Activated CD4-positive, alpha-beta T cell treated with anti-CD3 and anti-CD28 coated beads for 36 hours (primary cell): ENCODE measurements at regions of chr5 and their contacts with region 1.

Region 1: DNA sequence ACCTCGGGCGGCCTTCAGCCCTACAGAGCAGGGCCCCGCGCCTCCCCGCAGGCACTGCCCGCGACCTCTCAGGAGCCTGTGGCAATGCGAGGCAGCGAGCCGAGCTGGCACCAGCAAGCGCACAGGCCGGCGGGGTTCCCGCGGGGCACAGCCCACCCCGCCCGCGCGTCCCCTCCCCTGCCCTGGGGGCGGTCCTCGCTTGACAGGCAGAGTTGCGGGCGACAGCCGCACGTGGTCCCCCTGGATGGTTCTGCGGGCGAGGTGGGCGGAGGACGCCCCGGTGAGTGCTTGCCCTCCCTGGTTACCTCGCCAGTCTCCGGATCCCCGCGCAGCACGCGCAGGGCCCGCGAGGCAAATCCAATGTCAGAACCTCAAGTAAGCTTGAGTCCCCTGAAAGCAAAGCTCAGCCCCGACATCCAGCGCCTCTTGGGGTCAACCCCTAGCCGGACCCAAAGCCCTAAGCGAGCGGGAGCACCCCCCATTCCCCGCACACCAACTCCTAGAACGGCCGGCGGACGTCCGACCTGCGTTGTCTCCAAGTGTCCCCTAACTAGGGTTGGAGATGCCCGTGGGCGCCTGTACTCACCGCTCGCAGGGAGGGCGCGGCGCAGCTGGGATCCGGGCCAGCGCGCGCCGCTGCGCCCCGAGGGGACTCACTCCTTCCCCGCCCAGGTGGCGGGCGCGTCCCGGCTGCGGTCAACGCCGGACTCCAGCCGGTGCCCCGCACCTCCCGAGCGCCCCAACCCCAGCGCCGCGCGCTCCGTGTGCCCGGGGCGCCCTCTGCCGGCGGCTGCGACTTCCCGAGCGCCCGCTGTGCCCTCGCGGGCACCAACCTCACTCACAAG is at the start of gene DRD1:
- DNase-seq: peak; percentile 73
- ATAC-seq: peak; percentile 86
- H3K4me3 Mint-ChIP-seq: peak within 1 kb of the TSS; percentile 40
- H3K27ac Mint-ChIP-seq: no peak within 1 kb of the TSS
- H3K4me1 Mint-ChIP-seq: peaks cover 5% of the 10 kb centered on the region
- H3K27me3 Mint-ChIP-seq: peaks cover 52% of the 10 kb centered on the region
- total RNA-seq, gene DRD1: not detected

Region 2: DNA sequence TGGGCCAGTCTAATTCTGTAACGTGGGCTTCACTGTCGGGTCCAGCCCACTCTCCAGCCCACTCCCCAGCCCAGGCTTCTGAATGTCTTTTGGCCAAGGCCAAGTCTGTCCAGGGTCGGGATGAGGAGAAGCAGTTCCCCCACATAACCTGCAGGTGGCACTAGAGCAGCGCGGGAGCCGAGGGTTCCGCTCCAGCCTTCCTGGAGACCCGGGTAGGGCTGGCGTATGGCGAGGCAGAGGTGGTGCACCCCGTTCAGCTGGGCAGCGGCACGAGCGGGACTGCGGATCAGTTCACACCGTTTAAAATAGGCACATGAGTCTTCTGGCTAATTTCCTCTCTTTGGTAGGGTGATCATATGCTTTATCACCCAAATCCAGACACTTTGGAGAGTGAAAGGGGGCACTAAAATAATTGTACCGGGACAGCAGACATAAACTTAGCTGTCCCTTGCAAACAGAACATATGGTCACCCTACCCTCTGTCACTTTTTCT is 534.0 kb before region 1 on chr5:
- CTCF ChIA-PET with region 1: no interaction called
- POLR2A ChIA-PET with region 1: no interaction called
- intact Hi-C with region 1: loop called in 1 of 2 experiments (anchors 1 kb)
- DNase-seq: peak; percentile 75
- ATAC-seq: peak; percentile 66
- H3K4me3 Mint-ChIP-seq: no peak overlapping the region
- H3K27ac Mint-ChIP-seq: no peak overlapping the region
- H3K4me1 Mint-ChIP-seq: no peaks in the 10 kb centered on the region
- H3K27me3 Mint-ChIP-seq: peaks cover 35% of the 10 kb centered on the region

Region 3: DNA sequence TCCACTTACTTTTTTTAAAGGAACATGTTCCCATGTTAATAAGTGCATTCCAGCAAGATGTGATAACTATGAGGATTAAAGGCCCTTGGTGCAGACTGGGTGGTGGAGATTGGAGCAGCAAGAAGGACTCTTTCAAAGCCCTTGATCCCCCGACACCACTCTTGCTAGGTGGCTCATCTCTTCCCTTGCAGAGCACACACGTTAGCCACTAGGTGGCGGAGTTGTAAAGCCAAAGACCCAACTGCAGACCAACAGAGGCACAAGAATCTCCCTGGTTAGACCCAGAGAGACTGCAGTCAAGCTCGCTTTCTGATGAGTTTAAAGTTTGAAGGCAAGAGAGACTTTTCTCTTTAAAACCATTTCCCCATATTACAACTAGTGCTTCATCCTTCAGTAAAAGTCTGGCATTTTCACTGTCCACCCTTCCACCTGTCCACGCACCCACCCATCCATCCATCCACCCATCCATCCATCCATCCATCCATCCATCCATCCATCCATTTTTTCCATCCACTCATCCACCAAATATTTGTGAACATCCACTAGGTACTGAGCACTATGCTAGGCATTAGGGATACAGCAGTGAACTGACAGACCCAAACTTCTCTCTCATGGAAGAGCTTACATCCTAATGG is 493.0 kb before region 1 on chr5:
- CTCF ChIA-PET with region 1: interaction called, 5 read pairs
- POLR2A ChIA-PET with region 1: no interaction called
- intact Hi-C with region 1: loop called (anchors 1 kb)
- DNase-seq: peak; percentile 74
- ATAC-seq: peak; percentile 74
- H3K4me3 Mint-ChIP-seq: no peak overlapping the region
- H3K27ac Mint-ChIP-seq: no peak overlapping the region
- H3K4me1 Mint-ChIP-seq: no peaks in the 10 kb centered on the region
- H3K27me3 Mint-ChIP-seq: peaks cover 10% of the 10 kb centered on the region

Region 4: DNA sequence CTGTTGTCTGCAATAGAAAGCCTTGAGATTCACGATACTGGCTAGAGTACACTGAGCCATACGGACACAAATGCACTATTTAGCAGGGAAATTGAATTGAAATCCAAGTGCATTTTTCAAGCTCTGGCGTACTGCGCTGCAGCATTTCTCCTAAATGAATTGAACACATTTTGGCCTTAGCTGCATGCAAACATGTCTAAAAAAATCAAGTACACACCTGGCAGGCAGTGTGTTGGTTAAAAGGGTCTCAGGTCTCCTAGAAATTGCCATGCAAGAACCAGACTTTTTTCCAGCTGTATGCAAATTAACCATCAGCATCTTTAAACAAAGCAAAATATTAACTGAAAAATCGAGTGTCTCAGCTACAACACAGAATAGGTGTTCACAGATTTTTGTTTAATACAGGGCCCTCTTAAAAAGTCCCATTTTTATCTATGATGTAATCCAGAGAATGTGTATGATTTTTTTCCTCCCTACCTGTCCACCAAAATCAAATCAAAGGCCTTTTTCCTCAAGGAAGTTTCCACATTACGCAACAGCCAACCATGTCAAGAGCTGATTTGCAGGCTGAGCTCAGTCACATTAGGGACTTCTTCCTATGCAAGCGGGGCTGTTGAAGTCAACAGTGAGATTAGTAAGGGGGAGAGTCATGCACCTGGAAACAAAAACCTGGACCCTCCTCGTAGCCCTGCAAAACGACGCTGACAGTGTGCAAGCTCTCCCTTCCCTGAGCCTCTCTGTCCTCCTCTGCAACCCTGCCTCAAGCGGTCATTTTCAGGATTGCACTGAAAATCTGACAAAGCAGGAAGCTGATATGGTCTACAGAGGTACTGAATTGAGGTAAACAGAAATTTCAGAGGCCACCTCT is 20.0 kb after region 1 on chr5:
- CTCF ChIA-PET with region 1: interaction called, 12 read pairs
- POLR2A ChIA-PET with region 1: no interaction called
- intact Hi-C with region 1: no loop called
- DNase-seq: peak; percentile 84
- ATAC-seq: peak; percentile 98
- H3K4me3 Mint-ChIP-seq: no peak overlapping the region
- H3K27ac Mint-ChIP-seq: peak overlapping the region; percentile 34
- H3K4me1 Mint-ChIP-seq: peaks cover 12% of the 10 kb centered on the region
- H3K27me3 Mint-ChIP-seq: peaks cover 6% of the 10 kb centered on the region

Region 5: DNA sequence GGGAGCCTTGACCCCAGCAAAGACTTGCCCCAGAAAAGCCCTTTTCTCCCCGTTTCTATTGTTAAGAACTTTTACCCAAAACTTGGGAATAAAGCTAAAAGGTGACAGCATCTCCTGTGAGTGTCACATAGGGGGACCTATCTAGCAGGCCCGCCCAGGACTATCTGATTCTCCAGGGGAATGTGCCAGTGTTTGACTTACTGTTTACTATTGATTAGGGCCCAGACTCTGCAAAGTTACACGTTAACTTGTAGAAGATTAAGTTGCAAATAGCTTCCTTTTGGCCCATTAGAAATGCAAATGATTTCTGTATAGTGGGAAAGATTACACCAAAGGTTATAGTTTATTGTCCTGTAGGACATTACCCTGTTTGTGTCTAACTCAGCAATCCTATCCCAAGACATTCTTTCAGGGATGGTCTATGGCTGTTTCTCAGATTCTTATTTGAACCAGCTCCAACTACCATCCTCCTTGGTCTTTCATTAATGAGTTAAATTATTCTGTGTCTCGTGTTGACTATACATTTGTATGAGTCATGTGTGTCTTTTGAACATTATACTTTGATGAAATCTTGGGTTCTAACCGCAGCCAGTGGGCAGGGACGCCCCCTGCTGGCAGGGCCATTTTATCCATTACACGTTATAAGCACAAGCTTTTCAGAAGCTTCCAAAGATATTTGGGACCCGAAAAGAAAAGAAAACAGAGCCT is 274.3 kb after region 1 on chr5:
- CTCF ChIA-PET with region 1: no interaction called
- POLR2A ChIA-PET with region 1: no interaction called
- intact Hi-C with region 1: no loop called
- DNase-seq: peak; percentile 88
- ATAC-seq: peak; percentile 91
- H3K4me3 Mint-ChIP-seq: no peak overlapping the region
- H3K27ac Mint-ChIP-seq: no peak overlapping the region
- H3K4me1 Mint-ChIP-seq: peaks cover 6% of the 10 kb centered on the region
- H3K27me3 Mint-ChIP-seq: no peaks in the 10 kb centered on the region